Dendritic cell treated with granulocyte-macrophage colony-stimulating factor and Interleukin-4, amounts not matched to agents 40 ng/mL and 50 ng/mL, for 4 days (primary cell): ENCODE measurements at regions of chr4 and their contacts with region 1.

Region 1: DNA sequence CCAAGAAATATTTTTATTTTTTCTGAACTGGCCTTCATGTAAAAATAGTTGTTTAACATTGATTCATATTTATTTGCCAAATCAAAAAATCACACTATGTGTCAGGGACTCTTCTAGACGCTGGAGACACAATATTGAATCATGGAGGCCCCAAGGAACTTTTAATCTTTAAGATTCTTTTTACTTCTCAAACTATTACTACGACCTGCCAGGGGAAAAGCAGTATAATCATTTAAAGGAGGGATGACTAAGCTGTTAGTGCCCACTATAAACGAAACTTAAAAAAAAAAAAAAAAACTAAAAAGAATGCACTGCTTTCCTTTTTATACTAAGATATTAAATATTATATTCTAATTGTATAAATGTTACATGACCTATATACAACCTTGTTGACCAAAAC is 84.7 kb downstream of the PPA2 start:
- H3K4me3 Mint-ChIP-seq: no peak overlapping the region
- H3K27ac Mint-ChIP-seq: no peak overlapping the region
- H3K4me1 Mint-ChIP-seq: no peaks in the 10 kb centered on the region
- H3K27me3 Mint-ChIP-seq: no peaks in the 10 kb centered on the region

Region 2: DNA sequence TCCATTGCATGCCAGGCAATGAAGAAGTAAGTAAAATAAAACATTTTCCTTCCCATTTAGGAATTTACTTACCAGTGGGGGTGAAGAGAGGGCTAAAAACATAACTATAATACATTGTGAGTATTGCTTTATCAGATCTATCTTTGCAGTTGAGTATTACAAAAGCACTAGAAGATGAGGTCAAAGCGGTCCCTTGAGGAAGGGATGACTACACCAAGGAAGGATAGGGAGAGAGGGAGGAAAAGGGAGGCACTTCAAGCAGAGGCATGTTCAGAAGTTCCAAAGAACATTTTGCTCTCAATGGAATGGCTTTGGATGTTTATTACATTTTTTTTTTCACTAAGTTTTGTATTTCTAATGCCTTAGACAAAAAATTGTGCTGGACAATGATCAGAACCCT is 114.7 kb before region 1 on chr4:
- intact Hi-C with region 1: loop called (anchors 10 kb)
- H3K4me3 Mint-ChIP-seq: no peak overlapping the region
- H3K27ac Mint-ChIP-seq: no peak overlapping the region
- H3K4me1 Mint-ChIP-seq: no peaks in the 10 kb centered on the region
- H3K27me3 Mint-ChIP-seq: no peaks in the 10 kb centered on the region

Region 3: DNA sequence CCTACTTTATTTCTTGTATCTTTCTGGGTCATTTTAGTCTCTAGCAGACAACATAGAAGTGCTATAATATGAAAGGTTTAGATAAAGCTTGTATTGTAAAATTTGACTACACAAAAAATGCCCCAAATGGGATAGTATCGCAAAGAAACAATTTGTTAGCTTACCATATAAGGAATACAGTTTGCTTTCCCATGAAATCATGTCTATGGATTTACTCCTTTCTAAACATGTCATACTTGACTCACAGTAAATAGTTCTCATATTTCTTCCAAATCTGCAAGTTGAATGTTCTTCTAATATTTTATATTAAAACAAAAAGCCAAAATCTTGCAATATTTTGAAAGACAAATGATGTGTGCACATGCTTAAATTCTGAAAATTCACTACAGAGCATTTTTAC is 19.2 kb before region 1 on chr4:
- intact Hi-C with region 1: no loop called
- H3K4me3 Mint-ChIP-seq: no peak overlapping the region
- H3K27ac Mint-ChIP-seq: no peak overlapping the region
- H3K4me1 Mint-ChIP-seq: no peaks in the 10 kb centered on the region
- H3K27me3 Mint-ChIP-seq: no peaks in the 10 kb centered on the region

Region 4: GRCh38 chr4:105453550-105454205 is 64.5 kb after region 1 on chr4:
- intact Hi-C with region 1: no loop called
- H3K4me3 Mint-ChIP-seq: no peak overlapping the region
- H3K27ac Mint-ChIP-seq: no peak overlapping the region
- H3K4me1 Mint-ChIP-seq: peaks cover 19% of the 10 kb centered on the region
- H3K27me3 Mint-ChIP-seq: no peaks in the 10 kb centered on the region

Region 5: GRCh38 chr4:105471566-105472176 is 82.5 kb after region 1 on chr4:
- intact Hi-C with region 1: no loop called
- H3K4me3 Mint-ChIP-seq: peak overlapping the region; percentile 59
- H3K27ac Mint-ChIP-seq: peak overlapping the region; percentile 99
- H3K4me1 Mint-ChIP-seq: peaks cover 42% of the 10 kb centered on the region
- H3K27me3 Mint-ChIP-seq: no peaks in the 10 kb centered on the region